ENCODE measurements at regions of chrX and their contacts with region 1.

Region 1: DNA sequence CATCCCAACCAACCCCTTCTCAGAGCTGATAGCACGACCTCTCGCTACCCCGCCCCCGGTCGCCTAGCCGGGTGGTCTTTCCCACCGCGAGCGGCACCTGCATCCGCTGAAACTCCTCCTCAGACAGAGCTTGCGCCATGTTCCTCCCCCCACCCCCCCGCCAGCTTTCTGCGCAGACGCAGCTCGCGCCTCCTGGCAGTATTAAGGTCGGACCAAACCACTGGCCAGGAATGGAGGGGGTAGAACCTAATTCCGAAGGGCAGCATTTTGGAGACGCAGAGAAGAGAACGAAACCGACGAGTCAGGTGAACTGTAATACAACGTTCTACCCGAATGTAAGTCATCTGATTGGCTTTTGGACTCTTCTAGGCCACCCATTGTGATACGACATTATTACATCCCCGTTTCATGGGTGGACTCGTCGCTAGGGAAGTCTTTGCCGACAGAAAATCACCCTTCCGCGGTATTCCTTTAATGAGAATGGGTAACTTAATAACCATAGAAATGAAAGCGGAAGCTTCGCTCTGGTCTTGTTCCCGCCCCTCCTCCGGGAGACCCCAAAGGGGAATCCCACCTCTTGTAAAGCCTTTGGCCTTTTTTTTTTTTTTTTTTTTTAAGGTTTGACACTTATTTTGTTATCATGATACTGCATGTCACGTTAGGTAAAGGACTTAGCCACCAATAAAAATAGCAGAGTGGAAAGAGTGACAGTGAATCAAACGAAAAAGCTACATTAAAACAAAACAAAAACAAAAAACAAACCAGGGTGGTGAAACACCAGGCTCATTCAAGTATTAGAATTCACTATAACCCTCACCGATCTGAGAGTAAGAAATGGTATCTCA is at the start of gene GRIPAP1:
- DNase-seq: peak; percentile 70
- H3K4me3 Mint-ChIP-seq: peak within 1 kb of the TSS; percentile 96
- H3K27ac Mint-ChIP-seq: peak within 1 kb of the TSS; percentile 96
- H3K4me1 Mint-ChIP-seq: peaks cover 31% of the 10 kb centered on the region
- H3K27me3 Mint-ChIP-seq: no peaks in the 10 kb centered on the region
- total RNA-seq, gene GRIPAP1: 86.5 and 93.1 TPM in 2 replicates

Region 2: DNA sequence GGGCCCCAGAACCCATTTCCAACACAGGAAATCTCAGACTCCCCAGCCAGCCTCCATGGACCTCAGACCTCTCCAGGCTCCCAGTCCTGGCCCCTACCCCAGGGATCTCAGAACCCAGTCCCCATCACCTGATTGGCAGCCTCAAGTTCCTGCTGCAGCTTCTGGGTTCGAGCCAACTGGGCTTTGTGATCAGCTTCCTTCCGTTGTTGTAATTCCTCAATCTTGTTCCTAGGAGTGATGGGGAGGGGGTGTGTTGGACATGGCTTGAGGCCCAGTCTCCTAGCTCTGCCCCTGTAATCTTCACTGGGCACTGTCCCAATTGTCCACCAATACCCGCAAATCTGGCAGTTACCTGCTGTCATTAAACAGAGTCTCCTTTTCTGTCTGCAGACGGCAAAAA is 12.8 kb before region 1 on chrX:
- intact Hi-C with region 1: no loop called
- DNase-seq: no peak
- H3K4me3 Mint-ChIP-seq: no peak overlapping the region
- H3K27ac Mint-ChIP-seq: no peak overlapping the region
- H3K4me1 Mint-ChIP-seq: no peaks in the 10 kb centered on the region
- H3K27me3 Mint-ChIP-seq: no peaks in the 10 kb centered on the region

Region 3: GRCh38 chrX:49073601-49074571 is 71.6 kb after region 1 on chrX and contains the start of gene PRAF2:
- intact Hi-C with region 1: loop called (anchors 2 kb)
- DNase-seq: peak; percentile 85
- H3K4me3 Mint-ChIP-seq: peak within 1 kb of the TSS; percentile 78
- H3K27ac Mint-ChIP-seq: peak within 1 kb of the TSS; percentile 70
- H3K4me1 Mint-ChIP-seq: peaks cover 19% of the 10 kb centered on the region
- H3K27me3 Mint-ChIP-seq: no peaks in the 10 kb centered on the region
- total RNA-seq, gene PRAF2: 14.2 and 14.4 TPM in 2 replicates